ENCODE measurements at regions of chr9 and their contacts with region 1.

Region 1: DNA sequence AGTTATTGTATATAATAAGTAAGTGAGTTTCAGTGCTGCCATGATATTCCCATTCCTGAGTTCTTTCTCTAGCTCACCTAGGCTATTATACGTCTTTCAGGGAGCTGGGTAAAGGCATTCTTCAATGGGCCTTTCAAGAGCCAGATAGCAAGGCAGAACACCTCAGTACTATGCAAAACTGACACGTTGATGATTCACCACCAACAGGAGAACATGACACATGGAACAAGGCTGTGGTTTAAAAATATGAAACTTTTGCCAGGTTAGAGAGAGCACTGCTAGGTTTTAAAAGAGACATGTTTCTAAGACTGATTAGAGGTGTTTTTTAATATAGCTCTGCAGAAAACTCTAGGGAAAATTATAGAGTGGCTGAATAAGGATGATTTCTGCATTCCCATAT is 95.9 kb downstream of the UGCG start:
- DNase-seq: no peak
- H3K4me3 ChIP-seq: no peak overlapping the region
- H3K27ac ChIP-seq: no peak overlapping the region
- H3K4me1 ChIP-seq: no peaks in the 10 kb centered on the region
- H3K27me3 ChIP-seq: no peaks in the 10 kb centered on the region
- CTCF ChIP-seq: no peak
- POLR2A ChIP-seq: no peak

Region 2: GRCh38 chr9:111728621-111729366 is 263.7 kb before region 1 on chr9:
- intact Hi-C with region 1: no loop called
- DNase-seq: no peak
- H3K4me3 ChIP-seq: no peak overlapping the region
- H3K27ac ChIP-seq: no peak overlapping the region
- H3K4me1 ChIP-seq: no peaks in the 10 kb centered on the region
- H3K27me3 ChIP-seq: no peaks in the 10 kb centered on the region
- CTCF ChIP-seq: no peak
- POLR2A ChIP-seq: no peak

Region 3: DNA sequence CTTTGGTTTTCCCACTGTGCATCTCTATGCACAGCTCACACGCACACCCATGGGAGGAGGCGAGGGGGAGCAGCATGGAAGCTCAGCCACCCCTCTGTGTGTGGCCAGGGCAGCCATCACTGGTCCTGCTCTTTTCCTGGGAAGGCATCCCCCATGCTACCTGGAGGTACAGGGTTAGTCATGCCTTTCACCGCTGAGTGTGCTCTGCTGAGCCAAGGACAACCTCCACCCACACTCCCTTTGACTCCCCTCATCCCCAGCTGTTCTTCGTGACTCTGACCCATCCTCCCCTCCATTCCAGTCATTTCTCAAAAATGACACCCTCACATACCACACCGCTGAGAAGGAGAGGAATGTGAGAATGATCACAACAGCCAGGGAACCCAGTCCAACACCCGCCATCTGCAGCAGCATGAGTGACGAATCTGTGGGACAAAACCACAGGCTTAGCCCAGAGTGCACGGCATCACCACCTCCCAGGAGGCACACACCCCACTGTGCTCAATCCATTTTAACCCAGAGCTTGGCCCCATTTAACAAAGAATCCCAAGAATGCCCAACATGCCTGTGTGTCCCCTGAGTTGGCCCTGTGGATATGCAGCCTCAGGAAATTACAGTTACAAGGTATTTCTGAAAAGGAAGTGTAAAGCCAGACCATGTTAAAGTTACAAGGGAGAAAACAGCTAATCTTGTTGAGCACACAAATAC is 49.2 kb after region 1 on chr9:
- intact Hi-C with region 1: loop called (anchors 5 kb)
- DNase-seq: no peak
- H3K4me3 ChIP-seq: no peak overlapping the region
- H3K27ac ChIP-seq: no peak overlapping the region
- H3K4me1 ChIP-seq: no peaks in the 10 kb centered on the region
- H3K27me3 ChIP-seq: no peaks in the 10 kb centered on the region
- CTCF ChIP-seq: no peak
- POLR2A ChIP-seq: no peak

Measured in prostate gland (tissue), 2 donors.